Heart right ventricle (tissue), 16 donors: ENCODE measurements at regions of chr20 and their contacts with region 1.

Region 1: GRCh38 chr20:52321396-52321795 is 129.8 kb upstream of the ZFP64 start:
- DNase-seq: no peak
- ATAC-seq: no peak
- H3K4me3 ChIP-seq: no peak overlapping the region
- H3K27ac ChIP-seq: no peak overlapping the region
- H3K4me1 ChIP-seq: no peaks in the 10 kb centered on the region
- H3K27me3 ChIP-seq: peaks cover 0 to 17% (median 0%) of the 10 kb centered on the region in 7 donors
- CTCF ChIP-seq: no peak

Region 2: GRCh38 chr20:52291109-52291508 is 30.3 kb before region 1 on chr20:
- intact Hi-C with region 1: no loop called
- DNase-seq: no peak
- ATAC-seq: no peak
- H3K4me3 ChIP-seq: no peak overlapping the region
- H3K27ac ChIP-seq: no peak overlapping the region
- H3K4me1 ChIP-seq: no peaks in the 10 kb centered on the region
- H3K27me3 ChIP-seq: peaks cover 0 to 2% (median 0%) of the 10 kb centered on the region in 7 donors
- CTCF ChIP-seq: no peak

Region 3: GRCh38 chr20:54029643-54030042 is 1708.2 kb after region 1 on chr20:
- intact Hi-C with region 1: loop called in 1 of 10 experiments (anchors 5 kb)
- DNase-seq: no peak
- ATAC-seq: no peak
- H3K4me3 ChIP-seq: no peak overlapping the region
- H3K27ac ChIP-seq: no peak overlapping the region
- H3K4me1 ChIP-seq: no peaks in the 10 kb centered on the region
- H3K27me3 ChIP-seq: peaks cover 0 to 33% (median 10%) of the 10 kb centered on the region in 7 donors
- CTCF ChIP-seq: no peak